AG04449 (cell line): ENCODE measurements at regions of chr4 and their contacts with region 1.

Region 1: GRCh38 chr4:71229477-71230270 is 109.1 kb upstream of the SLC4A4 start:
- DNase-seq: no peak
- H3K4me3 ChIP-seq: no peak overlapping the region; the same call in 1 of the 2 replicates
- CTCF ChIP-seq: peak; percentile 76

Region 2: GRCh38 chr4:71202705-71203104 is 27.0 kb before region 1 on chr4:
- CTCF ChIA-PET with region 1: interaction called, 13 read pairs
- POLR2A ChIA-PET with region 1: no interaction called
- DNase-seq: no peak
- H3K4me3 ChIP-seq: no peak overlapping the region
- CTCF ChIP-seq: no peak

Region 3: DNA sequence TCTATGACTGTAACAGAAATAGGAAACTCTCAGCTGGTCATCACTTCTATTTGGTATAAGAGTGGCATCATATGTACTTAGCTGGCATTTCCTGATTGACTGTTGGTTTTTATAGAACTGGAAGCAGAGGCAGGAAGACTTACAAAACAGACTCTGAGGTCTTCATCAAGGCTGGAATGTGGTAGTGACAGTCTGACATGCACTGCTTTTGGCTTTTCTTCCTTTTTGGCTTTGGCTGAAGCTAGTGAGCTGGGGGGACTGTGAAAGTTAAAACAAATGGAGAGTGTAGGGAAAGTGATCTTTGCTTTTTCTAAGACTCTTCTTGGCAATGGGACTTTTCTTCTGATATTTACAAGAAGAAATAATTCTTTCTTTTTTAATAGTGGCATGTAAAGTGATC is 12.0 kb before region 1 on chr4:
- CTCF ChIA-PET with region 1: interaction called, 91 read pairs
- POLR2A ChIA-PET with region 1: no interaction called
- DNase-seq: no peak
- H3K4me3 ChIP-seq: no peak overlapping the region
- CTCF ChIP-seq: no peak

Region 4: DNA sequence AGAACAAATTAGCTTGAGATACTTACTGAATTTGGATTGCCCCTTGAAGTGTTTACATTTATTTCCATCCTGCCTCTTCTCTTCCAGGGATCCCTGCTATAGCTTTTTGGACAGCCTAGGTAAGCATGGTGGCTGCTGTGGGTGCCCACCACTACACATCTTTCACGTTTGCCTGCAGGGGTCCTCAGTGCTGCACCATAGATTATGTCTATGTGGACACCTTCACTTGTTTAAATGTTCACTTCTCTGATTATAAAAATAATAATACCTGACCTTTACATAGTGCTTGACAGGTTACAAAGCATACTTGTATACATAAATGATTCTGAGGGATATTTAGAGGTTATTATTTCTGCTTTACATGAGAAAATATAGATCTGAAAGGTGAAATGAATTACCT is 41.2 kb after region 1 on chr4:
- CTCF ChIA-PET with region 1: interaction called, 18 read pairs
- POLR2A ChIA-PET with region 1: interaction called, 4 read pairs
- DNase-seq: no peak
- H3K4me3 ChIP-seq: no peak overlapping the region
- CTCF ChIP-seq: peak; percentile 40

Region 5: DNA sequence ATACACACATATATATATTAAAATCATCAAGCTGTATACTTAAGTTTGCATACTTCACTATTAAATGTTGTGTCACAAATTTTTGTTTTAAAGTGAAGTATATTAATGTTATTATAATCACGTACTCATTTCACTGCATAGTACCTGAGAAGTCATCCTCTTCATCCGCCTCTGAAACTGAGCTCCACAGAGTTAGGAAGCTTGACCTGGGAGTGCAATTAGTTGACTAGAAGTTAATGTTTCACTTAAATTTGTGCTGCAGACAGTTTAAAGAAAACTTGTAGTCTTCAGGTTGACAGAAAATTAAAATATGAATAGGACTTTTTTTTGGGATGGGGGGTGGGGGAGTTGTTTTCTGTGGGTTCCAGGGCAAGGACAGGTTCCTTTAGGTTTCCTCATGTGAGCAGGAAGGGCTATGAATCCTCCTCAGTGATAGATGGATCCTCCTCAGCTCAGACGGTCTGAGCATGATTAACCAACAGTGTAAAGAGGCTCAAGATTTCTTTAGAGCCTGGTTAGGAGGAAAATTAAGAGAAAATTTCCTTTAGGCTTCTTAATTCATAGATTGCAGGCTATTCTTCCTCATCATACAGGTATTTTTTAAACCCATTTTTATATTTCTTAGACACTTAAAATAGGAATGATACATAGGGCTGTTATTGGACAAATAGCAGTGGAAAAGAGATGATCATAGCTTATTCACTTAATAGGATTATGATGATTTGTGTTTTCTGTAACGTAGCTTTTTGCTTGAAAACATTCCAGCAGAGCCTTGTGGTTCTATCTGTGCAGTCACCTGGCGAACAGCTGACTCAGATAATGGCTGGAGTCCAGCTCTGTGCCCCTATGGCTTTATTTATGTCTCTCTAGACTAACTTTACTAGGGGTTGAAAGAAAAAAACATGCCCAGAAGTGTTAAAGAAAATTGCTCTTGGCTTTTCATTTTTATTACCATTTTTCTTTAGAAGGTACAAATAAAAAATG is 211.8 kb after region 1 on chr4:
- CTCF ChIA-PET with region 1: no interaction called
- POLR2A ChIA-PET with region 1: no interaction called
- DNase-seq: no peak
- H3K4me3 ChIP-seq: no peak overlapping the region
- CTCF ChIP-seq: no peak

Region 6: GRCh38 chr4:71456841-71457240 is 227.2 kb after region 1 on chr4:
- CTCF ChIA-PET with region 1: no interaction called
- POLR2A ChIA-PET with region 1: no interaction called
- DNase-seq: peak; percentile 82
- H3K4me3 ChIP-seq: no peak overlapping the region
- CTCF ChIP-seq: no peak

Region 7: GRCh38 chr4:71713611-71714203 is 484.0 kb after region 1 on chr4:
- CTCF ChIA-PET with region 1: interaction called, 24 read pairs
- POLR2A ChIA-PET with region 1: no interaction called
- DNase-seq: peak; percentile 36
- H3K4me3 ChIP-seq: no peak overlapping the region
- CTCF ChIP-seq: peak; percentile 50